Mammary epithelial cell (primary cell): ENCODE measurements at regions of chr4 and their contacts with region 1.

Region 1: DNA sequence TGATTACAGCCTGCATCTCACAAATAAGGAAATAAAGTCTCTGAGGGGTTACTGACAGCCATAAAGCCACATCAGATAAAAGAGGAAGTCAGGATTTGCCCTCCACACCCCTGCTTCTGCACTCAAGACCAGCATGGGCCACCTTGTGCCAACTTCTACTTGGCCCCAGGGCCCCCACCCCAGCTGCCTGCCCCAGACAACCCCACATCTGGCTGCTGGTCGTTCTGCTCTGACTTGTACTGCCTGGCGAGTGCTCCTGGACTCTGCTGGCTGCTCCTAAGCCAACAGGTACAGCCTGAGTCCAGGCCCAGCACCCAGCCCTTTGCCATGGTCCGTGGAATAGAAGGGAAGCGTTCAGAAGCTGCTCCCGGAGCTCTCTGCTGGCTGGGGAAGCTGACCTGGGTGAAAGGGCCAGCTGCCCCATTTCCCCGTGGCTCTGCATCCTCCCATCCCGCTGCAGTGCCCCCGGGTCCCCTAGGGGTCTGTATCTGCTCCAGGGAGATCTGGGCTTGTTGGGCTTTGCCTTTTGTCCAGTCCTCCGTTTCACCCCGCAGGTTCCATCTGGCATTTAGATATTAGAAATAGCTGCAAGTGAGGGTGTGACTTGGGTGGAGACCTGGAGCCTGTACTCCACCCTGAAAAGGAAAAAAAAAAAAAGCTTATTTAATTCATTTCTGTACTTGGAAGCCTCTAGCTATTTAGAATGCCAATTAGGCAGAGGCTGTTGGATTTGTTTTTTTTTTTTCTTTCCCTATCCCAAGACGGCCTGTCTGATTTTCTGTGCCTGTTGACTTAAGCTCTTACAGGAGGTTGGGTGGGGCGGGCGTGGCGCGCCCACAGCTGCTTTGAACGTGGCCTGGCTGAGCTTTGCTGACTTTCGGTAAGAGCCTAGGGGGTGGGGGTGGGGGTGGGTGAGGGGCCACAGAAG is 194.7 kb downstream of the PTTG2 start:
- DNase-seq: peak; percentile 54
- H3K4me3 ChIP-seq: no peak overlapping the region
- H3K27ac ChIP-seq: no peak overlapping the region
- H3K4me1 ChIP-seq: peaks cover 20% of the 10 kb centered on the region
- H3K27me3 ChIP-seq: no peaks in the 10 kb centered on the region
- CTCF ChIP-seq: no peak

Region 2: DNA sequence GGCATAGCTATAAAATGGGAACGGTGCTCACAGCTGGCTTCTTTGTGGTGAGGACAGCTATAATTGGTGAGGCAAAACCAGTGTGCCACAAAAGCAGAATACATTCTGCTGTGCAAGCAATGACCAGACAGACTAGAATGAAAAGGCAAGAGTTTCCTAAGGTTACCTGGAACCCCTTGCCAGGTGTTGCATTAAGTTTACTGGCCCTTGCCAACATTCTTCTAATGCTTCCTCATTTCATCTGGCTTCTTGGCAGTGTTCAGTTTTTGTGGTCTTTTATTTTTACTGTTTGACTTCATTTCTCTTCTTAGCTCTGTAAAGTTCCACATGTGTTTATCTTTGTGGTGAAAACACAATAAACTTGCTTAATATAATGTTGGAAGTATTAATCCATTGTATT is 63.3 kb before region 1 on chr4:
- CTCF ChIA-PET with region 1: no interaction called
- dilution Hi-C with region 1: no loop called
- in situ Hi-C with region 1: no loop called
- intact Hi-C with region 1: no loop called
- DNase-seq: peak; percentile 57
- H3K4me3 ChIP-seq: no peak overlapping the region
- H3K27ac ChIP-seq: peak overlapping the region; percentile 26
- H3K4me1 ChIP-seq: no peaks in the 10 kb centered on the region
- H3K27me3 ChIP-seq: no peaks in the 10 kb centered on the region
- CTCF ChIP-seq: no peak

Region 3: DNA sequence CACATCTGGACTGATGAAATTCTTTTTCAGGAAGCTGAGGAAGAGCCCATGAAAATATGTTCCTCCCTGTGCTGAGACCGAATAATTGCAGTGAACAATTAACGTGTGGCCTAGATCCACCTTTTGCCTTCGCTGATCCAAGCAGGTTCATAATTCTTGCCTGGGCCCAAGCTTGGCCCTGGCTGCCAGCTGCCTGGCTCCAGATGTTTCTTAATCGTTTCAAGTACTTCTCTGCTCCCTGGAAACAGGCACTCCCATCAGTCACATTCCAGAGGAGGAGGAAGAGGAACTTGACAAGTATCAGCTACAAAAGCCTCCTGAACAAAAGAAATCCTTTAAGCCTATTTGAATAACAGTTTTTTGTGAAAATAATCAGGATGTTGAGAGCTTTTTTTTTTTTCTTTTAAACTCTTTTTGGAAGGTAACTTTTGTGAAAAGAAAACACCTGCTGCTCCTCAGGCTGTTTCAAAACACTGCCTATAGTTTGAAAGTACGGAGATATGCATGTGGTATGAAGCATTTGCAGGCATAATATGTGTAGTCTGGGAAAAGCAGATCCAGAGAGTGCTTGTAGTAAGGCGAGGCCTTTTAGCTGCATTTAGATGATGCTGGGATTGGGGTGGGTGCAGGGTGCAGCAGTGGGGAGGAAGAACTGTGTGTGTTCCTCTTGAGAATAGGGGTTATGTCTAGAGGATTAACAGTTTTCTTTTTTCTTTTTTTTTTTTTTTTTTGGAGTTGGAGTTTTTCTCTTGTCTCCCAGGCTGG is 40.4 kb before region 1 on chr4:
- CTCF ChIA-PET with region 1: no interaction called
- dilution Hi-C with region 1: loop called (anchors 5 kb)
- in situ Hi-C with region 1: no loop called
- intact Hi-C with region 1: no loop called
- DNase-seq: no peak
- H3K4me3 ChIP-seq: no peak overlapping the region
- H3K27ac ChIP-seq: no peak overlapping the region
- H3K4me1 ChIP-seq: peaks cover 2% of the 10 kb centered on the region
- H3K27me3 ChIP-seq: no peaks in the 10 kb centered on the region
- CTCF ChIP-seq: no peak

Region 4: GRCh38 chr4:38237139-38237538 is 82.2 kb after region 1 on chr4:
- CTCF ChIA-PET with region 1: no interaction called
- dilution Hi-C with region 1: no loop called
- in situ Hi-C with region 1: no loop called
- intact Hi-C with region 1: no loop called
- DNase-seq: peak; percentile 90
- H3K4me3 ChIP-seq: no peak overlapping the region
- H3K27ac ChIP-seq: no peak overlapping the region
- H3K4me1 ChIP-seq: peaks cover 10% of the 10 kb centered on the region
- H3K27me3 ChIP-seq: no peaks in the 10 kb centered on the region
- CTCF ChIP-seq: peak in 1 of 2 donors; percentile 18

Region 5: GRCh38 chr4:38759113-38759789 is 604.3 kb after region 1 on chr4:
- CTCF ChIA-PET with region 1: no interaction called
- dilution Hi-C with region 1: no loop called
- in situ Hi-C with region 1: no loop called
- intact Hi-C with region 1: no loop called
- DNase-seq: peak; percentile 24
- H3K4me3 ChIP-seq: no peak overlapping the region
- H3K27ac ChIP-seq: no peak overlapping the region
- H3K4me1 ChIP-seq: no peaks in the 10 kb centered on the region
- H3K27me3 ChIP-seq: no peaks in the 10 kb centered on the region
- CTCF ChIP-seq: peak; percentile 55 to 71